Caco-2 (cell line): ENCODE measurements at regions of chr6 and their contacts with region 1.

Region 1: DNA sequence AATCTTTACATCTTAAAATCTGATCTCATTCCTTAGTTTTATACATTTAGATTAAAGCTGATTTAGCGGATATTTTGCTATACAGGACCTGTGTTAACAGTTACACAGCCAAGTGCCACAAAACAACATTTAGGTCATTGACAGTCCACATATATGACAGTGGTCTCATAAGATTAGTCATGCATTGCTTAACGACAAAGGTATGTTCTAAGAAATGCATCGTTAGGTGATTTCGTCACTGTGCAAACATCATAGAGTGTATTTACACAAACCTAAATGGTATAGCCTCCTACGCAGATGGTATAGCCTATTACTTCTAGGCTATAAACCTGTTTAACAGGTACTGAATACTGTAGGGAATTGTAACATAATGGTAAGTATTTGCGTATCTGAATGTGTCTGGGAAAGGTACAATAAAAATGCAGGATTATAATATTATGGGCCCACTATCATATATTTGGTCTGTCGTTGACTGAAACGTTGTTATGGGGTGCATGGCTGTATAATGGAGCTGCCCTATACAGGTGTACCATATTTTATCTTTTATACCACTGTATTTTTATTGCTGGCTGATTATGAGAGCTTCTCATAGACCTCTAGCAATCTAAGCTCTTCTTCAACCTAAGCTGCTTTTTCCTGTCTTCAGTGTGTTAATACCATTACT is 21.7 kb downstream of the ADGRG6 start:
- DNase-seq: peak; percentile 49 to 80
- H3K4me3 ChIP-seq: no peak overlapping the region
- H3K4me3 Mint-ChIP-seq: peak overlapping the region; percentile 29
- H3K27ac Mint-ChIP-seq: peak overlapping the region; percentile 80
- H3K4me1 ChIP-seq: peaks cover 70% of the 10 kb centered on the region
- H3K4me1 Mint-ChIP-seq: peaks cover 52% of the 10 kb centered on the region
- H3K27me3 ChIP-seq: no peaks in the 10 kb centered on the region
- H3K27me3 Mint-ChIP-seq: no peaks in the 10 kb centered on the region
- CTCF ChIP-seq: no peak

Region 2: DNA sequence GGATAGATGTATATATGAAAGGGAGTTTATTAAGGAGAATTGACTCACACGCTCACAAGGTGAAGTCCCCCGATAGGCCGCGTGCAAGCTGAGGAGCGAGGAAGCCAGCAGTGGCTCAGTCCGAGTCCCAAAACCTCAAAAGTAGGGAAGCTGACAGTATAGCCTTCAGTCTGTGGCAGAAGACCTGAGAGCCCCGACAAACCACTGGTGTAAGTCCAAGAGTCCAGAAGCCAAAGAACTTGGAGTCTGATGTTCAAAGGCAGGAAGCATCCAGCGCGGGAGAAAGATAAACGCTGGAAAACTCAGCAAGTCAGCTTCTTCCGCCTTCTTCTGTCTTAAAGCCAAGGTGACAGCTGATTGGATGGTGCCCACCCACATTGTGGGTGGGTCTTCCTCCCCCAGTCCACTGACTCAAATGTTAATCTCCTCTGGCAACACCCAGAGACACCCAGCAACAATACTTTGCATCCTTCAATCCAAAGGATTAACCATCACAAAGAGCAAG is 293.3 kb before region 1 on chr6:
- CTCF ChIA-PET with region 1: no interaction called
- POLR2A ChIA-PET with region 1: no interaction called
- intact Hi-C with region 1: no loop called
- DNase-seq: no peak
- H3K4me3 ChIP-seq: peak overlapping the region; percentile 21
- H3K4me3 Mint-ChIP-seq: peak overlapping the region; percentile 46
- H3K27ac Mint-ChIP-seq: no peak overlapping the region
- H3K4me1 ChIP-seq: peaks cover 15% of the 10 kb centered on the region
- H3K4me1 Mint-ChIP-seq: peaks cover 10% of the 10 kb centered on the region
- H3K27me3 ChIP-seq: no peaks in the 10 kb centered on the region
- H3K27me3 Mint-ChIP-seq: peaks cover 3% of the 10 kb centered on the region
- CTCF ChIP-seq: no peak

Region 3: DNA sequence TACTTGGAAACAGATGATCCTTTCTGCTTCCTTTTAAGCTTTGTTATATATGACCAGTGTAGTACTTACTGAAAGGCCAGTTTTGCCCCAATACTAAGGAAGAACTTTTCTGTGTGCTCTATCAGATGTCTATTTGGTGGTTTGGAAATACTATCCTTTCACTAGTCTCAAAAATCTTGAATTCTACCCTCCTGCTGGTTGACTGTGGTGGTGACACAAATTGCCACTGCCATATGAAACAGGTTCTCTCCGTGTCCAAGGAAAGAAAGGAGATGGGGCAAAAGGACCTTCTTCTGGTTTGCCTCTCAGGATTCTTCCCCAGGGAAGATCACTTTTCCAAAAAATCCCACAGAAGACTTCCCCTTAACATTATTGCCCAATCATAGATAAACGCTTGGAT is 184.6 kb before region 1 on chr6:
- CTCF ChIA-PET with region 1: no interaction called
- POLR2A ChIA-PET with region 1: no interaction called
- intact Hi-C with region 1: no loop called
- DNase-seq: no peak
- H3K4me3 ChIP-seq: no peak overlapping the region
- H3K4me3 Mint-ChIP-seq: no peak overlapping the region
- H3K27ac Mint-ChIP-seq: no peak overlapping the region
- H3K4me1 ChIP-seq: no peaks in the 10 kb centered on the region
- H3K4me1 Mint-ChIP-seq: no peaks in the 10 kb centered on the region
- H3K27me3 ChIP-seq: no peaks in the 10 kb centered on the region
- H3K27me3 Mint-ChIP-seq: peaks cover 6% of the 10 kb centered on the region
- CTCF ChIP-seq: no peak

Region 4: GRCh38 chr6:142255785-142256184 is 67.7 kb before region 1 on chr6:
- CTCF ChIA-PET with region 1: no interaction called
- POLR2A ChIA-PET with region 1: no interaction called
- intact Hi-C with region 1: loop called (anchors 1 kb)
- DNase-seq: no peak
- H3K4me3 ChIP-seq: no peak overlapping the region
- H3K4me3 Mint-ChIP-seq: no peak overlapping the region
- H3K27ac Mint-ChIP-seq: no peak overlapping the region
- H3K4me1 ChIP-seq: peaks cover 22% of the 10 kb centered on the region
- H3K4me1 Mint-ChIP-seq: peaks cover 19% of the 10 kb centered on the region
- H3K27me3 ChIP-seq: no peaks in the 10 kb centered on the region
- H3K27me3 Mint-ChIP-seq: no peaks in the 10 kb centered on the region
- CTCF ChIP-seq: no peak

Region 5: DNA sequence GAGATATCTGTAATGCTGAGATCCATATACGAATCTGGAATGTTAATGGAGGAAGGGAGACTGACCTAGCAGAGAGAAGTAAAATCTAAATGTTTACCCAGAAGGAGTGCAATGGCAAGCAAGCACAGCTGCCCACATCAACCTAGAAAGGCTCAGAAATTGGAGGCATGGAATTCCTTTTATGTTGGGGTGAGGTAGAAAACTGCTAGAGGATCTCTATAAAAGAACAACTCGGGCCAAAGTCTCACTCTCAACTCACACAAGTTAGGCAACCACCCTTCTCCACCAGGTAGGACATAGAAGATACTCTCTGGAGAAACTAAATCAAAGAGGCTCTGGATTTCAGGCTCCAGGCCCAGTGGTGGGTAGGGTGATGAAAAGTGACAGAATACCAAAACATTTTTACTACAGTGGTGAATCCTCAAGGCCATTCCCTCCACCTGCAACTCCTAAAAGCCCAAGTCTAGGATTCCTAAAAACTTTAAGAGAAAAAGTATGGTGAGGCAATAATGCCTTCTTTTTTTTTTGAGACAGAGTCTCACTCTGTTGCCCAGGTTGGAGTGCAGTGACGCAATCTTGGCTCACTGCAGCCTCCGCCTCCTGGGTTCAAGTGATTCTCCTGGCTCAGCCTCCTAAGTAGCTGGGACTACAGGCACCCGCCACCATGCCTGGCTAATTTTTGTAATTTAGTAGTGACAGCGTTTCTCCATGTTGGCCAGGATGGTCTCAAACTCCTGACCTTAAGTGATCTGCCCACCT is 31.2 kb before region 1 on chr6:
- CTCF ChIA-PET with region 1: no interaction called
- POLR2A ChIA-PET with region 1: no interaction called
- intact Hi-C with region 1: loop called (anchors 1 kb)
- DNase-seq: peak; percentile 72 to 73
- H3K4me3 ChIP-seq: no peak overlapping the region
- H3K4me3 Mint-ChIP-seq: no peak overlapping the region
- H3K27ac Mint-ChIP-seq: peak overlapping the region; percentile 84
- H3K4me1 ChIP-seq: peaks cover 43% of the 10 kb centered on the region
- H3K4me1 Mint-ChIP-seq: peaks cover 50% of the 10 kb centered on the region
- H3K27me3 ChIP-seq: no peaks in the 10 kb centered on the region
- H3K27me3 Mint-ChIP-seq: no peaks in the 10 kb centered on the region
- CTCF ChIP-seq: no peak

Region 6: DNA sequence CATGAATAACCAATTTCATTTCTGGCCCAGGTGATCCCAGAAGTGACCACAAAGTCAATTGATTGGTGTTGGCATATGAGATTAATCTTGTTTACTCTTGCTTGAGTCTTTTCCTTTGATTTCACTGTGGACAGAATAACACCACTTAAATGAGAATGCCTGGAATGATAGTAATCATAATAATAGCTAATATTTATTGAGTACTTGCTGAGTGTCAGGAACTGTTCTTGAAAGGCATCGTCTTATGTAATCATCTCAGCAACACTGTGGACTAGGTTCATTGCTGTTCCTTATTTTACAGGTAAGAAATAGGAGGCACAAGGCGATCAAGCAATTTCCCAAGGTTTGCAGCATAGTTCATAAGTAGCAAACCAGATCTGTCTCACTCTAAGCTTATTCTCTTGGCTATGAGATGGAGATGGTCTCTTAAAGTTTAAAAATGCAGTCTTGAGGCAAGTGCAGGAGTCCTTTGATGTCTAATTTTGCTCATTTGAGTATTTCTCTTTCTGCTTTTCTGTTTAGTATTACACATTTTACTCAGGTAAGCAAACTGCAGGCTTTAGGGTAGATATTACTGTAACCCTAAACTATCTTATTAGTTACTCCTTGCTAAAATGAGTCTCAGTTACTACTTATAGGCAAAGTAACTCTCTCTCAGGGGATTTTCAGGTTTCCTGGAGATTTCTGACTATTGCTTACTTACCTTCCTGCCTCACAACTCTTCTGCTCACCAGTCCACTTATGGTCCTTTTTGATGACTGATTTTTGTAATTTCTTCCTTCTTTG is 15.4 kb before region 1 on chr6:
- CTCF ChIA-PET with region 1: no interaction called
- POLR2A ChIA-PET with region 1: interaction called, 3 read pairs
- intact Hi-C with region 1: loop called (anchors 2 kb)
- DNase-seq: no peak
- H3K4me3 ChIP-seq: no peak overlapping the region
- H3K4me3 Mint-ChIP-seq: peak overlapping the region; percentile 24
- H3K27ac Mint-ChIP-seq: no peak overlapping the region
- H3K4me1 ChIP-seq: peaks cover 78% of the 10 kb centered on the region
- H3K4me1 Mint-ChIP-seq: peaks cover 40% of the 10 kb centered on the region
- H3K27me3 ChIP-seq: no peaks in the 10 kb centered on the region
- H3K27me3 Mint-ChIP-seq: no peaks in the 10 kb centered on the region
- CTCF ChIP-seq: no peak

Region 7: DNA sequence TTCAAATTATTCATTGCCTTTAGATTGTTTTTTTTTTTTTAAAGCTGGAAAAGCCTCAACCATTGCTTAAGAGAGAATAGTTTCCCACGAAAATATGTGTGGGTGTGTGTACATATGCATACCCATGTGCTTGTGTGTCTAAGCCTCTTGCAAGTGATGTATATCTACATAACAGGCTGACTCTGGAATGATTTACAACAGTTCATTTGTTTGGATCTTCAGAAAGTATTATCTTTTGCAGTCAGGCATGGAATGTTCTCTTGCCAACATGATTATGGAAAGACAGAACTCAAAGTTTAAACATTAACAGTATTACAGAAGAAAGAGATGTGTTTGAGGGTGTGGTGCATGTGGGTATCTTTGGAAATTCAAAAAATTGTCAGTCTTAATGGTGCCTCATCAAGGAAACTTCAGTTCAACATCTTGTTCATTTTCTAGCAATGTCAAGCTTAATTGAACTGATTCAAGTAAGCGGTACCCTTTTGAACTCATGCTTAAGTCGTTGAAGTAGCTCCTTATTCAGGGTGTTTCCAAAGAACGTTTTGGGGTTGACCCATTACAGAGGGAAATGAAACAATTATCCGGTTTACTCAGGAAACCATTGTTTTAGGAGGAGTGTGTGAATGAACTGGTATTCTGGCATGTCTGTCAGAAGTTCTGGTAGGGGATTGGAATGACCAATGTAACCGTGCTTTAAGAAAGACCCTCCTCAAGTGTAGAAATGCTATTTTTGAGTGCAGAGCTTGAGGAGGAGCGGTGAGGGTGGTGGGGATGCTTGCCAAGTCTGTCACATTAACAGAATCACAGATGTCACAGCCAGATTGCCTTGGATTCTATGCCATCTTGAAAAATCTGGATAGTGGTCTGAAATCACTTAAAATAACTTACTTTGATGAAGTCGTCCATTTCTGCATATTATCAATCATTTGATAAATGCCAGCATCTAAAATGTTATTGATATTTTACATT is 38.6 kb after region 1 on chr6:
- CTCF ChIA-PET with region 1: no interaction called
- POLR2A ChIA-PET with region 1: no interaction called
- intact Hi-C with region 1: loop called (anchors 1 kb)
- DNase-seq: peak; percentile 63 to 69
- H3K4me3 ChIP-seq: no peak overlapping the region
- H3K4me3 Mint-ChIP-seq: peak overlapping the region; percentile 70
- H3K27ac Mint-ChIP-seq: peak overlapping the region; percentile 74
- H3K4me1 ChIP-seq: peaks cover 59% of the 10 kb centered on the region
- H3K4me1 Mint-ChIP-seq: peaks cover 25% of the 10 kb centered on the region
- H3K27me3 ChIP-seq: no peaks in the 10 kb centered on the region
- H3K27me3 Mint-ChIP-seq: no peaks in the 10 kb centered on the region
- CTCF ChIP-seq: no peak

Region 8: DNA sequence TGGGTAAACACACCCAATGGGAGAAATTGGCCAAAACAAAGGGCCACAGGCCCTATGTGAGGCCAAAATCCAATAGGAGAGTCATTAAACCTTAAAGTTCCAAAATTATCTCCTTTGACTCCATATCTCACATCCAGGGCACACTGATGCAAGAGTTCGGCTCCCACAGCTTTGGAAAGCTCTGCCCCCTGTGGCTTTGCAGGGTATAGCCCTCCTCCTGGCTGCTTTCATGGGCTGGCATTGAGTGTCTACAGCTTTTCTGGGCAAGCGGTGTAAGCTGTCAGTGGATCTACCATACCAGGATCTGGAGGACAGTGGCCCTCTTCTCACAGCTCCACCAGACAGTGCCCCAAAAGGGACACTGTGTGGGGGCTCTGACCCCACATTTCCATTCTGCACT is 138.8 kb after region 1 on chr6:
- CTCF ChIA-PET with region 1: no interaction called
- POLR2A ChIA-PET with region 1: no interaction called
- intact Hi-C with region 1: no loop called
- DNase-seq: peak in 1 of 2 experiments; percentile 18
- H3K4me3 ChIP-seq: no peak overlapping the region
- H3K4me3 Mint-ChIP-seq: no peak overlapping the region
- H3K27ac Mint-ChIP-seq: no peak overlapping the region
- H3K4me1 ChIP-seq: no peaks in the 10 kb centered on the region
- H3K4me1 Mint-ChIP-seq: no peaks in the 10 kb centered on the region
- H3K27me3 ChIP-seq: no peaks in the 10 kb centered on the region
- H3K27me3 Mint-ChIP-seq: peaks cover 3% of the 10 kb centered on the region
- CTCF ChIP-seq: no peak

Region 9: DNA sequence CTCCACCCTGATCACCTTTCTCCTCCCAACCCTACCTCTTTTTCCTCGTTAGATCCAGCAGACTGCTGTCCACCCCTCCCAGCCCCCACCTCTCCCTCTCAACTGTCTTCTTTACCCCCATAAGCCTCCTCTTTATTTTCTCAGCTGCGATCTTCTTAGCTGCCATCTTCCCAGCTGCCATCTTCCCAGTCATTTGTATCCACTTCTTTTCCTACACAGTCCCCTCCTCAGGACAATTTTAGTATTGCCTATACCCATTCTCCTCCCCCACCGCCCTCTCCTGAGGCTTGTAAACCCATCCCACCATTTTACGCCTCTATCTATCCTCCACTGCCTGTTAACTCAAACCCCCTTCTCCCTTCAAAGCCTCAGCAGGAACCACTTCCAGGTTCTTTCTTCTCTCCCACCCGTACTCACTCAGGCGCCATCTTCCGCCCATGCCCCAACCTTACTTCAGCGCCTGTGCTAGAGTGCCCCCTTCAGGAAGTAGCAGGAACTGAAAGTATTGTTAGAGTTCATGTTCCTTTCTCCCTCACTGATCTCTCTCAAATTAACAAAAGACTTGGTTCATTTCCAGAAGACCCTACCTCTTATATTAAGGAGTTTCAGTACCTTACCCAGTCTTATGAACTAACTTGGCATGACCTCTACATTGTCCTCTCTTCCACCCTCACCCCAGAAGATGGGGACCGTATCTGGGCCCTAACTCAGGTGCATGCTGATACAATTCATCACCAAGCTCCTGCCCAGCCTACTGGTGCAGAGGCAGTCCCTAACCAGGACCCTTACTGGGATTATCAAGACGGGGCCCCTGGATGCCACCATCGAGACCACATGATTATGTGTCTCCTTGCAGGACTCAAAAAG is 214.3 kb after region 1 on chr6:
- CTCF ChIA-PET with region 1: no interaction called
- POLR2A ChIA-PET with region 1: no interaction called
- intact Hi-C with region 1: no loop called
- DNase-seq: peak in 1 of 2 experiments; percentile 19
- H3K4me3 ChIP-seq: no peak overlapping the region
- H3K4me3 Mint-ChIP-seq: no peak overlapping the region
- H3K27ac Mint-ChIP-seq: no peak overlapping the region
- H3K4me1 ChIP-seq: no peaks in the 10 kb centered on the region
- H3K4me1 Mint-ChIP-seq: no peaks in the 10 kb centered on the region
- H3K27me3 ChIP-seq: no peaks in the 10 kb centered on the region
- H3K27me3 Mint-ChIP-seq: no peaks in the 10 kb centered on the region
- CTCF ChIP-seq: peak; percentile 5 to 40